WTC11 (cell line): ENCODE measurements at regions of chr2 and their contacts with region 1.

Region 1: DNA sequence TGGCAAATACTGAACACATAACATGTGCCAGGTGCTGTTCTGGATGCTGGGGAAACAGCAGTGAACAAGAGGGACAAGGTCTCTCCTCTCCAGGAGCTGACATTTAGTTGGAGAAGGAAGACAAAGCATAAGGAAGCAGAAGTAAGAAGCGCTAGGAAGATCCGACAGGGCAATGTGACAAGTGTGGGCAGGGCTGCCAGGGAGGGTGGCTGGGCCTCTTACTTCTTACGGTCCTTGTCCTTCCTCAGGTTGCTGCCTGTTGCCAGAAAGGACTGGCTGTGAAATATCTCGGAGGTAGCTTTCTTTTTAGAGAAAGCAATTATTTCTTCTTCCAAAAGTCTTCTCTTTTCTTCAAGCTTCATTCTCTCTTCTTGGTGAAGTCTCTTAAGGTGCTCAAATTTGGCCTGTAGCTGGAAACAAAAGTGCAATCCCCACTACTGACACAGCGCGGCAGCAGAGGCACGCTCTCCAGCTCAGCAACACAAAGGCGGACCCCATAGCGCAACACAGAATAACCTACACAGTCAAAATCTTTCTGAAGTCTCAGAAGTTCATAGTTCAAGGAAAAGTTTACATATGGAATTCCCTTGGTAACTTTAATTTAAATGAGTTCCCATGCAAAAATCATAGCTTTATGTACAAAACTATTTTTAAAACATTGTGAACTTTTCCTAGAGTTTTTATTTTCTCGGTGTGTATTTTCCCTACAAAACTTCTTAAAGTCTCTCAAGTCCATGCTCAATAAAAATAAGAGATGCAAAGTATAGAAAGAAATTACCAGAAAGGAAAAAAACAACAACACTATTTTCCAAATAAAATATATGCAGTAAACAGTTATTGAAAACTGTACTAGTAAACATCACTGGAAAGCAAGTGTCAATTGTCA is 67.7 kb downstream of the SEPTIN10 start:
- DNase-seq: peak; percentile 67
- ATAC-seq: peak; percentile 93
- H3K4me3 Mint-ChIP-seq: no peak overlapping the region
- H3K27ac Mint-ChIP-seq: no peak overlapping the region
- H3K4me1 Mint-ChIP-seq: no peaks in the 10 kb centered on the region
- H3K27me3 Mint-ChIP-seq: no peaks in the 10 kb centered on the region
- CTCF ChIP-seq: peak; percentile 74

Region 2: GRCh38 chr2:109057686-109058085 is 488.4 kb before region 1 on chr2:
- CTCF ChIA-PET with region 1: no interaction called
- POLR2A ChIA-PET with region 1: no interaction called
- DNase-seq: no peak
- ATAC-seq: no peak
- H3K4me3 Mint-ChIP-seq: no peak overlapping the region
- H3K27ac Mint-ChIP-seq: no peak overlapping the region
- H3K4me1 Mint-ChIP-seq: peaks cover 10% of the 10 kb centered on the region
- H3K27me3 Mint-ChIP-seq: no peaks in the 10 kb centered on the region
- CTCF ChIP-seq: no peak

Region 3: DNA sequence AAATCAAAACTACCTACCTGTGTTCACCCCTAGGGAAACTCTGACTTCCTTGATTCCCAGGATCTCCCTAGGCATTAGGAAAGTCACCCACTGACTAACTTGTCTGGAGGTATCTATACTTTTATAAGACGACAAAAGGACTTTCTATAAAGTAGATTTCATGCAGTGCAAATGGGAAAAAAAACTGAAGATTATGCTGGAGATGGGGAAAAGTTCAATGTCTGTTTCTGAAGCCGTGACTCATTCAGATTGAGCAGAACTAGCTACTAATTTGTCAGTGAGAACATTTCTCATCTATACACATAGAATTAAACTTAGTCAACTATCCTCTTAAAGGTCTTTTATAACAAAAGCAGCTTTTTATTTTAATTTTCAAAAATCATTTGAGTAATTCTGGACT is 61.7 kb after region 1 on chr2:
- CTCF ChIA-PET with region 1: interaction called, 15 read pairs
- POLR2A ChIA-PET with region 1: no interaction called
- DNase-seq: no peak
- ATAC-seq: no peak
- H3K4me3 Mint-ChIP-seq: no peak overlapping the region
- H3K27ac Mint-ChIP-seq: peak overlapping the region; percentile 19; the same call in 1 of the 2 replicates
- H3K4me1 Mint-ChIP-seq: peaks cover 50% of the 10 kb centered on the region
- H3K27me3 Mint-ChIP-seq: no peaks in the 10 kb centered on the region
- CTCF ChIP-seq: no peak

Region 4: DNA sequence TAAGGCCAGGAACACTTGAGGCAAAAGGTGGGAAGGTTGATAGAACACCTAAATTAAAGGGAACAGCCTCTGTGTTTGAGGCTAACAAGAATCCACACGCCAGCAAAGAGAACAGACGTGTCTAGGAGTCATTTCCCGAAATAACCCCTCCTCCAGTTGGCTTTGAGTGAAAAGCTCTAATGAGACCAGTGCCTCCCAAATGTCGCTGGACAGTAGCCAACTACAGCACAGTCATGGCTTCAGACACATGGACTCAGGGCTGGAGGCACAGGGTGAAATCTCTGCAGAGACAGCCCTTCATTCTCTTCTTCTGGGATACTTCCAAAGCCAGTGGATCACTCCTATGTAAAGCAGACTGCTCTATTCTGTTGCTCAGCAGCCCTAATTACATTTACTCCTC is 117.7 kb after region 1 on chr2:
- CTCF ChIA-PET with region 1: interaction called, 20 read pairs
- POLR2A ChIA-PET with region 1: no interaction called
- DNase-seq: no peak
- ATAC-seq: no peak
- H3K4me3 Mint-ChIP-seq: no peak overlapping the region
- H3K27ac Mint-ChIP-seq: no peak overlapping the region
- H3K4me1 Mint-ChIP-seq: peaks cover 13% of the 10 kb centered on the region
- H3K27me3 Mint-ChIP-seq: no peaks in the 10 kb centered on the region
- CTCF ChIP-seq: no peak

Region 5: GRCh38 chr2:109720380-109721106 is 174.5 kb after region 1 on chr2:
- CTCF ChIA-PET with region 1: interaction called, 60 read pairs
- POLR2A ChIA-PET with region 1: no interaction called
- DNase-seq: no peak
- ATAC-seq: peak; percentile 28; the same call in 1 of the 2 replicates
- H3K4me3 Mint-ChIP-seq: no peak overlapping the region
- H3K27ac Mint-ChIP-seq: no peak overlapping the region
- H3K4me1 Mint-ChIP-seq: peaks cover 5% of the 10 kb centered on the region; the same call in 1 of the 2 replicates
- H3K27me3 Mint-ChIP-seq: no peaks in the 10 kb centered on the region
- CTCF ChIP-seq: no peak